ENCODE measurements at regions of chr18 and their contacts with region 1.

Region 1: GRCh38 chr18:66979009-66979408 is 375.1 kb upstream of the CDH19 start:
- DNase-seq: no peak
- H3K4me3 ChIP-seq: no peak overlapping the region
- CTCF ChIP-seq: no peak
- POLR2A ChIP-seq: no peak

Region 2: DNA sequence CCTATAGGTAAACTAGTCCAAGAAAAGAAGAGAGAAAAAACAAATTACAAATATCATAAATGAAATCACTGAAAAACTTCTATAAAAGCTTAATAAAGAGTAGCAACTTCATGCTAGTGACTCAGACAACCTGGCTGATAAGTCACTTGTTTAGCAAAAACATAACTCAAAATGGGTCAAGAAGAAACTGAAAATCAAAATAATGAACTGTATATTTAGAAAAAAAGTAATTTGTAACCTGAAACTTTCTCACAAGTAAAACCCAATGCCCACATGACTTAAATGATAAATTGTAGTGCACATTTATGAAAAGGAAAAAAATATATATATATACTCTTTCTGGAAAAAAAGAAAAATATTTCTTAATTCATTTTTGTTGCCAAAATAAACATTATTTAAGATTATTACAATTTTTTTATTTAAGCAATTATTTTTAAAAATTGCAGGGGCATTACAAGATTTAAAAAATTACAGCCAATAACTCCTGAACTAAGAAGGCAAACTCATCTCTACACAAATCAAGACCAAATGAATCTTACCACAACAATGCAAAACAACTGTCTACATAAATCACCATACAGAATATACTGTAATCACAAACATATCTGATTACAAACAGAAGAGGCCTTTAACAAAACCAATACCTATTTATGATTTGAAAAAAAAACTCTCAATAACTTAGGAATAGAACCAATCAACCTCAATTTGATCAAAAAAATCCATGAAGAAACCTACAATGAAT is 821.9 kb before region 1 on chr18:
- intact Hi-C with region 1: no loop called
- DNase-seq: no peak
- H3K4me3 ChIP-seq: no peak overlapping the region
- CTCF ChIP-seq: no peak
- POLR2A ChIP-seq: no peak

Region 3: DNA sequence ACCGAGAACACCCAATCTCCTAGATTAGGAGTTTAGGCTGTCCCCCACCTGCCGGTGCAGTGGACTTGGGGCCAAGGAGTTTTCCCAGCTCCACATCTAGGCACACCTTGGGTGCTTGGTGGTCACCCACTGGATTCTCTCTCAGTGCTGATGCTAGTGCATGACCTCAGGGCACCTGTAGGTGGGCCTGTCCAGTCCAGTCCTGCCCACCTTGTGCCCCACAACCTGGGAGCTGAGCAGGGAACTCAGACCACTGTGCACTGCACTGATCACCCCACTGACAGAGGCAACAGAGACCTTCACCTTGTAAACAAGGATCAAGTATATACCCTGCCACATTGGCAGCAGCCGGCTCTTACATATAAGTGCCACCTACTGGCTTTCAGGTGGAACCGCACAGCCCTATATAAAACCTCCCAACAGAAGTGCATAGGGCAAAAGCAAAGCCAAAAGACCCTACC is 362.5 kb before region 1 on chr18:
- intact Hi-C with region 1: loop called (anchors 5 kb)
- DNase-seq: no peak
- H3K4me3 ChIP-seq: no peak overlapping the region
- CTCF ChIP-seq: no peak
- POLR2A ChIP-seq: no peak

Region 4: DNA sequence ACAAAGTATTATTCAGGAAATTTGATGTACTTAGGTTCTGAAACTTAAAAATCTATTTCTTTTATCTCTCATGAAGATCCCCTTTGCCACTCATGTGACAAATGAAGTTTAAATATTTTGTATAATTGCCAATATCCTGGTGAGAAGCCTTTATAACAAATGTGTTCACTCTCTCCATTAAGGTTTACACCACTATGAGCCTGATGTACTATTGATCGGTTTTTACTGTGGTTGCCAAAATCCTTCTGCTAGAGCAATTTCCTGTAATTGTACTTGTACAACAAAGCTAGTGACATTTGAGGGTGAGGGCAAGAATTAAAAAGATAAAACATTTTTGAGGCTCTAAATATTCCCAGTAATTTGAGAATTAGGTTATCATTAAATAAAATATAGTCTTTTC is 152.8 kb before region 1 on chr18:
- intact Hi-C with region 1: loop called (anchors 5 kb)
- DNase-seq: no peak
- H3K4me3 ChIP-seq: no peak overlapping the region
- CTCF ChIP-seq: no peak
- POLR2A ChIP-seq: no peak

Region 5: GRCh38 chr18:67705748-67706147 is 726.7 kb after region 1 on chr18:
- intact Hi-C with region 1: no loop called
- DNase-seq: no peak
- H3K4me3 ChIP-seq: no peak overlapping the region
- CTCF ChIP-seq: no peak
- POLR2A ChIP-seq: no peak

Region 6: DNA sequence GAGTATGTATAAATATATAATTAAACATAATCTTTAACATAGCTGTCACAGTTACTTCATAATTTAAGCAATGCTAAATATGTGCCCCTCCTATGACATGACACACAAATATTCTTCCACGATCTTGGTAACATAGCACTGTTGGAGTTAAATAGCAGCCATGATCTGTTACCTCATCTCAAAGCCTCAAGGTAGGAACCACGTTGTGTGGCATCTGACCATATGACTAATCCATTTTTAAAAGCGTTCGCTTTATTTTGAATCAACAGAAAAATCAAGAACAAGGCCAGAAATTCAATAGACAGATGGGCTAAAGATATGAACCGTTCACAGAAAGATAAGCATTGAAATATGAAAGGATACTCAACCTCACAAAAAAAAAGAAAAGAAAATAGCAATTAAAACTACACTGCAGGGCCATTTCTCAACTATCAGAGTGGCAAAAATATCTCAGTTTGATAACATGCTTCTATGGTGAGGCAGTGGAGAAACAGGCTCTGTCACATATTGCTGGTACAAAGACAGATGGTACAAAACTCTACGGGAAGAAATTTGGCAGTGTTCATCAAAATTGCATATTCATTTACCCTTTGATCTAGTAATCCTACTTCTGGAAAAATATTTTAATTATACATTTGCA is 1630.0 kb after region 1 on chr18:
- intact Hi-C with region 1: no loop called
- DNase-seq: no peak
- H3K4me3 ChIP-seq: no peak overlapping the region
- CTCF ChIP-seq: no peak
- POLR2A ChIP-seq: no peak